Mammary epithelial cell (primary cell): ENCODE measurements at regions of chr5 and their contacts with region 1.

Region 1: DNA sequence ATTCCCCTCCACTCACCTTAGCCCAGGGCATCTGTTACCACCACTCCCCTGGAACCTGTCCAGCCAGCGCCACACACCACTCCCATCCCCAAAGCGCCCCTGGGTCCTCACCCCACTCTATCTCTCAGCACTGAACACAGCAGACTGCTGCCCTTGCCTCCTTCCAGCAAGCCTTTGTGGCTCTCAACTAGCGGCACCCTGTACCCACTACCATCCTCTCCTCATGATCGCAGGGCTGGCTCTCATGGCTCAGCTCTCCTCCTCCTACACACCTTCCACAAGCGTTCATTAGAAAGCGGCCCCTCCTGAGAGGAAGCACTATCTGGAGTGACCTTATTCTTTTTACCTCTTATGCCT is 13.3 kb upstream of the BASP1 start:
- DNase-seq: no peak
- H3K4me3 ChIP-seq: no peak overlapping the region
- H3K27ac ChIP-seq: no peak overlapping the region
- H3K4me1 ChIP-seq: peaks cover 9% of the 10 kb centered on the region
- H3K27me3 ChIP-seq: peaks cover 2% of the 10 kb centered on the region
- CTCF ChIP-seq: no peak

Region 2: DNA sequence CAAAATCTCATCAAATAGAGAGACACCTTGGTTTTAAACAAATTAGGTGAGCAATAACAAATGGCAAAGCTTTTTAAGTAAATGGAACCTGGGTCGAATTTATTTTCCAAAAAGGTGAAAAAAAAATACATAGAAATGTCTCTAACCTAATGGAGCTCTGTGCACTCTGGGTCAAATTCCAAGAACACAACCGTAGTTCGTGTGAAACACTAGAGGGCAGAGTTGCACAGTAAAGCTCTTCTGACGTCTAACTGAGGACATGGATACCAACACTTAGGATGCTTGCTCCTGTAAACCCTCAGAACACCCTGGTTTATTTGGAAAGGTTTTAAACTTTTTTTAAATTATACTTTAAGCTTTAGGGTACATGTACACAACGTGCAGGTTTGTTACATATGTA is 1043.4 kb before region 1 on chr5:
- CTCF ChIA-PET with region 1: no interaction called
- dilution Hi-C with region 1: no loop called
- in situ Hi-C with region 1: loop called (anchors 25 kb)
- intact Hi-C with region 1: loop called (anchors 5 kb)
- DNase-seq: peak; percentile 41
- H3K4me3 ChIP-seq: no peak overlapping the region
- H3K27ac ChIP-seq: no peak overlapping the region
- H3K4me1 ChIP-seq: no peaks in the 10 kb centered on the region
- H3K27me3 ChIP-seq: no peaks in the 10 kb centered on the region
- CTCF ChIP-seq: peak; percentile 71 to 85

Region 3: DNA sequence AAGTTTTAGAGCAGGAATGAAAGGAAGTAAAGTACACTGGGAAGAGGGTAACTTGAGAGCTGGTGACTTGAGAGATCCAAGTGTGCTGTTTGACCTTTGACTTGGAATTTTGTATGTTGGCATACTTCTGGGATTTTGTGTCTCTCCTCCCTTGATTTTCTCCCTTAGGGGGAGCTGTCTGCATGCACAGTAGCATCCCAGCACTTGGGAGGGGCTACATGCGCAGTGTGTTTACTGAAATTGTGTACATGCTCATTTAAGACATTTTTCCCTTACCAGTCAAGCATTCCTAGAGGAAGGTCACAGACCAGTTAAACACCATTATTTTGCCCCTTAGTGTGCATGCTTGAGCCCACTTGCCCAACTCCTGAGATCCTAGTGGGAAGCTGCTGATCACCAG is 858.7 kb before region 1 on chr5:
- CTCF ChIA-PET with region 1: no interaction called
- dilution Hi-C with region 1: no loop called
- in situ Hi-C with region 1: no loop called
- intact Hi-C with region 1: loop called (anchors 1 kb)
- DNase-seq: no peak
- H3K4me3 ChIP-seq: no peak overlapping the region
- H3K27ac ChIP-seq: no peak overlapping the region
- H3K4me1 ChIP-seq: no peaks in the 10 kb centered on the region
- H3K27me3 ChIP-seq: no peaks in the 10 kb centered on the region
- CTCF ChIP-seq: peak; percentile 22 to 48

Region 4: DNA sequence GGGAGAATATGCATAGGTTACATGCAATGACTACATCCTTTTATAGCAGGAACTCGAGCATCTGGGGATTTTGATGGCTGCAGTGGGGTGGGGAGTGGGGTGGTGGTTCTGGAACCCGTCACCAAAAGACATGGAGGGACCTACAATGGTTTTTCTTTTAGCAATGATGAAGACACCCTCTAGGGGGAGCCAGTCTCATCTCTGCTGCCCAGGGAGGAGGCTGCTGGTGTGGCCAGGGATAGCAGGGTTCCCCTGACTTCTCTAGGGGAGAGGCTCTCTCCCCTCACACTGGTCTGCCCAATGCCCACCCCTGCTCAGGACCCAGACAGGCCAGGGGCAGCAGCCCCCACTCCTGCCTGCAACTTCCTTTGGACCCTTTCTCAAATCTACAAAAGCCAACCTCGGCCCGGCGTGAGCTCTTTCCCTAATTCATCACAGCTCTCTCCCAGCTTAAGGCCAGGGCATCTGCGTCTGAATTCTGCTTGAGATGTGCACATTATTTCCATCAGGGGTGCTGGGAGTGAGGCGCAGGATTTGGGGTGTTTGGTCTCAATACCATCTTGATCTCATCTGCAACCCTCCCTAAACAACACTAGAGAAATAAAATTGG is 513.8 kb before region 1 on chr5:
- CTCF ChIA-PET with region 1: interaction called, 3 read pairs
- dilution Hi-C with region 1: no loop called
- in situ Hi-C with region 1: loop called in 1 of 2 experiments (anchors 25 kb)
- intact Hi-C with region 1: loop called (anchors 1 kb)
- DNase-seq: peak; percentile 26
- H3K4me3 ChIP-seq: no peak overlapping the region
- H3K27ac ChIP-seq: no peak overlapping the region
- H3K4me1 ChIP-seq: no peaks in the 10 kb centered on the region
- H3K27me3 ChIP-seq: no peaks in the 10 kb centered on the region
- CTCF ChIP-seq: peak; percentile 80 to 83